Activated CD4-positive, alpha-beta memory T cell treated with anti-CD3 and anti-CD28 coated beads for 36 hours (primary cell): ENCODE measurements at regions of chr9 and their contacts with region 1.

Region 1: DNA sequence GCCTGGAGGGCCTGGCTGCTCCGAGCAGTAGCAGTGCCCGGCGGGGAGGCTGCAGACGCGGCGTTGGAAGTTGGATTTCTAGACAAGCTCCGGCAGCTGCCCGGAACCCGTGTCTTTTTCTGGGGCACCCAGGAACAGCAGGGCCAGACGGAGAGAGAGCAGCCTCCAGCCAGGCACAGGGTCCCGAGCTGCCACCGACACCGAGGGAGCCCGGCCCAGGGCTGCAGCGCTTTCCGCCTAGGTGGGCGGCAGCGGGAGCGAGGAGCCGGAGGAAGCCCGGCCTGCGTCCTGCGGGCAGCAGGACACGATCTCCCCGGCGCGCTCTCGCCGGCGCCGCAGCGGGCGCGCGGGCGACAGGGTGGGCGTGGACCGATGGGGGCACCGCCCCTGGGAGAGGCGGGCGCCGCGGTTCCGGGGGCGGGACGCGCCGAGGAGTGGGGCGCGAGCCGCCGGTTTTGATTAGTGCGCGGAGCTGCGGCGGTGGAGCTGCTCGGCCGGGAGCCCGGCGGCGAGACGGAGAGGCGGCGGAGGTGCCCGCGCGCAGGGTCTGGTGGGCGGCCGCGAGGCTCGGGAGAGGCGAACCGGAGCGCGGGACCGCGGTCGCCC is at the start of gene UGCG:
- DNase-seq: peak; percentile 91
- H3K4me3 Mint-ChIP-seq: peak within 1 kb of the TSS; percentile 88
- H3K27ac Mint-ChIP-seq: peak within 1 kb of the TSS; percentile 83
- H3K4me1 Mint-ChIP-seq: peaks cover 23% of the 10 kb centered on the region
- H3K27me3 Mint-ChIP-seq: no peaks in the 10 kb centered on the region
- total RNA-seq, gene UGCG: 12.4 to 13.5 TPM

Region 2: DNA sequence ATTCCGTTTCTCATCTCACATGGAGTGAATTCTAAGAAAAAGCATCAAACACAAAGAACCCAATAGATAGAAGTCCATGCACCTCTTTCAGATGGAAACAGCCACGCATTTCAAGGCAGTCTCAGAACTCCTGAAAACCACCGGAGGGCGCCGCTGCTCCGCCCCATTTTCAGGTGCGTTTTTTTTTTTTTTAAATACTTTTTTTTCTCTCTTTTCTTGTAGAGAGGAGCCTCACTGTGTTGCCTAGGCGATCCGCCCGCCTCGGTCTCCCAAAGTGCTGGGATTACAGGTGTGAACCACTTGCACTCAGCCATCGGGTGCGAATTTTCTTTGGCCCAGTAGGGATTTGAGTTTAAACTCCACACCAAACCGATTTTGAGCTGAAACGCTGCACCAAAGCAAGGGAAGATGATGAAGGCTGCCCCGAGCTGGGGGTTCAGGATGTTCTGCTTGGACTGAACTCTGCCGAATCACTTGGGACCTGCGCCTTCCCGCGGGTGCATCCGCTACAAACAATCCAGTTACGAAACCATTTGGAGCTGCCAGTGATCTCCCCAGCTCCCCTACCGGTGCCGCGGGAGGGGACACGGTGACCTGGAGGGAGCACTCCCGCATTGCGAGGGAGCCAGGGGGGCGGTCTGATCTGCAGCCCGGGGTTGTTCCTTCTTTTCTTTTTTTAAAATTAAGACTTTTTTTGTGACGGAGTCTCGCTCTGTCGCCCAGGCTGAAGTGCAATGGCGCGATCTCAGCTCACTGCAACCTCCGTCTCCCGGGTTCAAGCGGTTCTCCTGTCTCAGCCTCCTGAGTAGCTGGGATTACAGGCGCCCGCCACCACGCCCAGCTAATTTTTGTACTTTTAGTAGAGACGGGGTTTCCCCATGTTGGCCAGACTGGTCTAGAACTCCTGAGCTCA is 298.4 kb before region 1 on chr9:
- CTCF ChIA-PET with region 1: no interaction called
- POLR2A ChIA-PET with region 1: no interaction called
- intact Hi-C with region 1: loop called (anchors 10 kb)
- DNase-seq: peak; percentile 76
- H3K4me3 Mint-ChIP-seq: peak overlapping the region; percentile 83
- H3K27ac Mint-ChIP-seq: no peak overlapping the region
- H3K4me1 Mint-ChIP-seq: peaks cover 14% of the 10 kb centered on the region
- H3K27me3 Mint-ChIP-seq: peaks cover 28% of the 10 kb centered on the region

Region 3: DNA sequence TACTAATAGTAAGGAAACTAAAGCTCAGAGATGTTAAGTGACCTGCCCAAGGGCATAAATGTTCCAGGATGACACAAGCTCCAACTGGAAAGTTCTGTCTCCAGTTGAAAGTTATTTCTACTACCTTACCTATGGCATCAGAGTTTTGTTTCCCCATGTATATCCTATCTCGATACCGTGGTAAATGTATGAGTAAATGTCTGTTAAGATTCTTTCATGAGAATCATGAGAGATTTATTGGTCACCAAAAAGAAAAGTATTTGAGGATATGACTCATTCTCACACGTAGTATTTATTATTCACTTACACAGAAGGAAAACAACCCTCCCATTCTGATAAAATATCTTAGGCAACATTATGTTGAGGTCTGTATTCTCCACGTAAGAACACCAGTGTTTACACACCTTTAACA is 90.6 kb before region 1 on chr9:
- CTCF ChIA-PET with region 1: no interaction called
- POLR2A ChIA-PET with region 1: no interaction called
- intact Hi-C with region 1: loop called (anchors 2 kb)
- DNase-seq: no peak
- H3K4me3 Mint-ChIP-seq: no peak overlapping the region
- H3K27ac Mint-ChIP-seq: no peak overlapping the region
- H3K4me1 Mint-ChIP-seq: peaks cover 30% of the 10 kb centered on the region
- H3K27me3 Mint-ChIP-seq: no peaks in the 10 kb centered on the region

Region 4: GRCh38 chr9:111825468-111826145 is 70.8 kb before region 1 on chr9:
- CTCF ChIA-PET with region 1: no interaction called
- POLR2A ChIA-PET with region 1: no interaction called
- intact Hi-C with region 1: no loop called
- DNase-seq: no peak
- H3K4me3 Mint-ChIP-seq: no peak overlapping the region
- H3K27ac Mint-ChIP-seq: no peak overlapping the region
- H3K4me1 Mint-ChIP-seq: no peaks in the 10 kb centered on the region
- H3K27me3 Mint-ChIP-seq: no peaks in the 10 kb centered on the region

Region 5: DNA sequence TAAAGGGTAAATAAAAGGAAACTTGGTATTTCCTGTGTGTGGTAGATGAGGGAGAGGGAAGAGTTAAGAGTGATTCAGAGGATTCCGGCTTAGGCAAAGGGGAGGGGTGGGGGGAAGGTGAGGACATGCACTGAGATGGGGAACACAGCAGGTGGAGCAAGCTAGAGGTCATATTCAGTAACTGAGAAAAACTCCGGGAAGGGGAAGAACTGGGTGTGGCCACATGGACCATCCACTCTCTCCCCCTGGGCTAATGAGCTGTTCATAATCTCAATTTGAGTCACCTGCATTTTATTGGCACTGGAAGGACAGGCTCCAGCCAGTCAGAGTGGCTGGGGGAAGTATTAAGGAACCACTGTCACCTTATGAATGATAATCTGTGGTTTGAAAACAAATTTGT is 44.9 kb before region 1 on chr9:
- CTCF ChIA-PET with region 1: no interaction called
- POLR2A ChIA-PET with region 1: no interaction called
- intact Hi-C with region 1: no loop called
- DNase-seq: no peak
- H3K4me3 Mint-ChIP-seq: no peak overlapping the region
- H3K27ac Mint-ChIP-seq: no peak overlapping the region
- H3K4me1 Mint-ChIP-seq: no peaks in the 10 kb centered on the region
- H3K27me3 Mint-ChIP-seq: no peaks in the 10 kb centered on the region

Region 6: GRCh38 chr9:111937781-111938426 is 41.4 kb after region 1 on chr9:
- CTCF ChIA-PET with region 1: no interaction called
- POLR2A ChIA-PET with region 1: interaction called, 3 read pairs
- intact Hi-C with region 1: loop called (anchors 1 kb)
- DNase-seq: peak; percentile 88
- H3K4me3 Mint-ChIP-seq: peak overlapping the region; percentile 53
- H3K27ac Mint-ChIP-seq: peak overlapping the region; percentile 83
- H3K4me1 Mint-ChIP-seq: peaks cover 23% of the 10 kb centered on the region
- H3K27me3 Mint-ChIP-seq: no peaks in the 10 kb centered on the region

Region 7: GRCh38 chr9:111992523-111992922 is 96.1 kb after region 1 on chr9:
- CTCF ChIA-PET with region 1: interaction called, 3 read pairs
- POLR2A ChIA-PET with region 1: interaction called, 9 read pairs
- intact Hi-C with region 1: loop called (anchors 2 kb)
- DNase-seq: peak; percentile 45
- H3K4me3 Mint-ChIP-seq: no peak overlapping the region
- H3K27ac Mint-ChIP-seq: peak overlapping the region; percentile 18
- H3K4me1 Mint-ChIP-seq: peaks cover 34% of the 10 kb centered on the region
- H3K27me3 Mint-ChIP-seq: peaks cover 2% of the 10 kb centered on the region

Region 8: GRCh38 chr9:112074250-112075008 is 178.0 kb after region 1 on chr9:
- CTCF ChIA-PET with region 1: interaction called, 8 read pairs
- POLR2A ChIA-PET with region 1: interaction called, 6 read pairs
- intact Hi-C with region 1: loop called (anchors 1 kb)
- DNase-seq: peak; percentile 71
- H3K4me3 Mint-ChIP-seq: peak overlapping the region; percentile 5
- H3K27ac Mint-ChIP-seq: peak overlapping the region; percentile 3
- H3K4me1 Mint-ChIP-seq: peaks cover 32% of the 10 kb centered on the region
- H3K27me3 Mint-ChIP-seq: peaks cover 1% of the 10 kb centered on the region

Region 9: GRCh38 chr9:112379177-112380101 is 483.0 kb after region 1 on chr9:
- CTCF ChIA-PET with region 1: no interaction called
- POLR2A ChIA-PET with region 1: no interaction called
- intact Hi-C with region 1: loop called (anchors 5 kb)
- DNase-seq: peak; percentile 99
- H3K4me3 Mint-ChIP-seq: peak overlapping the region; percentile 97
- H3K27ac Mint-ChIP-seq: peak overlapping the region; percentile 98
- H3K4me1 Mint-ChIP-seq: peaks cover 40% of the 10 kb centered on the region
- H3K27me3 Mint-ChIP-seq: no peaks in the 10 kb centered on the region